ENCODE measurements at regions of chr1 and their contacts with region 1.

Region 1: GRCh38 chr1:6393400-6394187 is at the start of gene ACOT7:
- DNase-seq: peak; percentile 84 to 93 (median 89)
- ATAC-seq: peak; percentile 96
- H3K4me3 ChIP-seq: peak within 1 kb of the TSS; percentile 75
- H3K4me3 Mint-ChIP-seq: peak within 1 kb of the TSS; percentile 87 to 97 (median 90)
- H3K27ac ChIP-seq: peak within 1 kb of the TSS; percentile 88
- H3K27ac Mint-ChIP-seq: peak within 1 kb of the TSS; percentile 85 to 98 (median 95)
- H3K4me1 ChIP-seq: peaks cover 13 to 22% of the 10 kb centered on the region in 2 donors
- H3K4me1 Mint-ChIP-seq: peaks cover 16 to 47% (median 32%) of the 10 kb centered on the region in 7 donors
- H3K27me3 ChIP-seq: no peaks in the 10 kb centered on the region
- H3K27me3 Mint-ChIP-seq: peaks cover 0 to 5% (median 0%) of the 10 kb centered on the region in 5 donors
- total RNA-seq, gene ACOT7: 2.5 to 75.6 (median 3.4) TPM

Region 2: GRCh38 chr1:6026095-6026809 is 367.3 kb before region 1 on chr1:
- CTCF ChIA-PET with region 1: no interaction called
- POLR2A ChIA-PET with region 1: no interaction called
- intact Hi-C with region 1: loop called in 1 of 2 experiments (anchors 1 kb)
- DNase-seq: peak; percentile 82 to 92 (median 89)
- ATAC-seq: peak; percentile 92
- H3K4me3 ChIP-seq: peak overlapping the region; percentile 89
- H3K4me3 Mint-ChIP-seq: peak overlapping the region; percentile 88 to 99 (median 95)
- H3K27ac ChIP-seq: peak overlapping the region; percentile 84
- H3K27ac Mint-ChIP-seq: peak overlapping the region; percentile 87 to 98 (median 96)
- H3K4me1 ChIP-seq: peaks cover 42 to 49% of the 10 kb centered on the region in 2 donors
- H3K4me1 Mint-ChIP-seq: peaks cover 45 to 56% (median 51%) of the 10 kb centered on the region in 7 donors
- H3K27me3 ChIP-seq: no peaks in the 10 kb centered on the region
- H3K27me3 Mint-ChIP-seq: no peaks in the 10 kb centered on the region

Region 3: DNA sequence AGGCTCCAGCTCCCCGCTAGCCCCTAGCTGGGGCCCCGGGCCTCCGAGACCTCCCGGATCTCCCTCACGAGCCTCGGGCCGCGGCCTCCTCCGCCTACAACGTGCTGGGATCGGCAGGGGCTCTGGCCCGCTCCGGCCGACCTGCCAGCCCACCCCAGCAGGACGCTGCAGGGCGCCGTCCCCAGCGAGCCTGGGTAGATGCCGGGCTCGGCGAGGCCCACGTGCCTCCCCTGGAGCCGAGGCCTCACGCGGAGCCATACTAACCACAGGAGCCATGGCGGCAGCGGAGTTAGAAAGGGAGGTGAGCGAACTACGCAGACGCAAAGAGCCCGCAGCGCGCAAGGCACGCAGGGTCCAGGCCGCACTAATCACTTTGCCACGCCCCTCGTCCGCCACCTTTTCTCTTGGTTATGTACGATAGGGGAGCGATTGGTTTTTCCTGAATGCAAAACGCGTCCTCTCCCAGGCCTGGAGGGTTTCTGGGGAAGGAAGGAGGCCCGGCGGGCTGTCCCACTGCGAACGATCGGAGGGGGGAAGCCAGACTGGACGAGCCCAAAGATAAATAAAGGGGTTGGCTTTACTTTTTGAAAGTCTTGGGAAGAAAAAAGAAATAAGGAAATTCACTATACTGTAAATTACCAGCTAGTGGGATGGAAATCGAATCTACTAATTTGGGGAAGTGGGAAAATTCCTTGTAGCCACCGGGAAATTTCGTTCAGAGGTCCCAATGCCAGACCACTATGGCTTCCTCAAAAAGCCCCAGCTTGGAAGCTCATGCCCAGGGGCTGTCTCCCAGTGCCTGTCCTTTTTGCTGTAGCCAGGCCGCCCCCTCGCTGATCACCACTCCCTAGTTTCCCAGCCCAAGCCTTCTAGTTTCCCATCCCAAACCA is 194.1 kb before region 1 on chr1 and contains the start of gene RPL22:
- CTCF ChIA-PET with region 1: no interaction called
- POLR2A ChIA-PET with region 1: no interaction called
- intact Hi-C with region 1: loop called in 1 of 2 experiments (anchors 1 kb)
- DNase-seq: peak; percentile 79 to 98 (median 96)
- ATAC-seq: peak; percentile 99
- H3K4me3 ChIP-seq: peak within 1 kb of the TSS; percentile 79
- H3K4me3 Mint-ChIP-seq: peak within 1 kb of the TSS; percentile 85 to 98 (median 94)
- H3K27ac ChIP-seq: peak within 1 kb of the TSS; percentile 85
- H3K27ac Mint-ChIP-seq: peak within 1 kb of the TSS; percentile 82 to 96 (median 93)
- H3K4me1 ChIP-seq: peaks cover 24 to 25% of the 10 kb centered on the region in 2 donors
- H3K4me1 Mint-ChIP-seq: peaks cover 40 to 56% (median 47%) of the 10 kb centered on the region in 7 donors
- H3K27me3 ChIP-seq: no peaks in the 10 kb centered on the region
- H3K27me3 Mint-ChIP-seq: peaks cover 0 to under 1% (median 0%) of the 10 kb centered on the region in 5 donors
- total RNA-seq, gene RPL22: 431 to 720 (median 579) TPM

Region 4: DNA sequence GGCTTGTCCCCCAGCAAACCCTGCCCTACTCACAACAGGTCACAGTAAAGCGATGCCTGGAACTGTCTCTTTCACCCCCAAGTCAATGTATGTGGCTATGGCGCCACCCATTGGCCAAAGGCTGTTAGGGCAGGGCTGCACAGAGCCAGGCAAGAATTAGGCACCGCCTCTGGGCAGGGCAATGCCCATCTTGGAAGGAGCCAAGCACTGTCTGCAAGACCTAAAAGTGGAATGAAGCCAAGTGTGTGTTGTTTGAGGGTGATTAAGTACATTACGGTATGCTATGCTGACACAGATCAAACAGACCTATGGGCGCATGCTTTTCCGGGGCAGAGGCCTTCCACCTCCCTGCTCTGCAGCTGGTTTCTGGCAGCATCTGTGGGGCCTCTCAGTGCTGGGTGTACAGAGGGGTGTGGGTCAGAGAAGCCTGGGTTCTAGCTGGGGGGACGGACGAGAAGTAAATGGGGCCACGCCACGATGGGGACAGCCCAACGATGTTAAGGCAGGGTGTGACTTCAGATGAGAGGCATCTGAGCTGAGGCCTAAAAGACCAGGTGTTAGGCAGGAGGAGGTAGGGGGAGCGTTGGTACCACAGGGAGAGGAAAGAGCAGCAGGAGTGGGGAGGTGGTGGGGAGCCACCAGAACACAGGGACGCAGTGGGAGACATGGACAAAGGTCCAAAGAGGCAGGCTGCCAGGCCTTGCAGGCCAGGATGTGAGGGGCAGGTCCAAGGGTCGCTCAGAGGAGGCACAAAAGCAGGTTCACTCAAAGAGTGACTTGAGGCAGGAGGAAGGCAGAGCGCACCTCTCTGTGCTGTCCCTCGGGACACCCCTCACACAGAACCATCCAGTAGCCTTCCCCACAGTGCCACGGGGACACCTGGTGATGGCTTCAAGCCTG is 49.8 kb before region 1 on chr1:
- CTCF ChIA-PET with region 1: interaction called, 6 read pairs
- POLR2A ChIA-PET with region 1: interaction called, 7 read pairs
- intact Hi-C with region 1: loop called (anchors 1 kb)
- DNase-seq: peak; percentile 19 to 67 (median 49)
- ATAC-seq: peak; percentile 73
- H3K4me3 ChIP-seq: no peak overlapping the region
- H3K4me3 Mint-ChIP-seq: no peak overlapping the region
- H3K27ac ChIP-seq: no peak overlapping the region
- H3K27ac Mint-ChIP-seq: peak overlapping the region in 1 of 9 donors; percentile 25
- H3K4me1 ChIP-seq: peaks cover 12 to 13% of the 10 kb centered on the region in 2 donors
- H3K4me1 Mint-ChIP-seq: peaks cover 9 to 24% (median 11%) of the 10 kb centered on the region in 7 donors
- H3K27me3 ChIP-seq: no peaks in the 10 kb centered on the region
- H3K27me3 Mint-ChIP-seq: no peaks in the 10 kb centered on the region

Region 5: DNA sequence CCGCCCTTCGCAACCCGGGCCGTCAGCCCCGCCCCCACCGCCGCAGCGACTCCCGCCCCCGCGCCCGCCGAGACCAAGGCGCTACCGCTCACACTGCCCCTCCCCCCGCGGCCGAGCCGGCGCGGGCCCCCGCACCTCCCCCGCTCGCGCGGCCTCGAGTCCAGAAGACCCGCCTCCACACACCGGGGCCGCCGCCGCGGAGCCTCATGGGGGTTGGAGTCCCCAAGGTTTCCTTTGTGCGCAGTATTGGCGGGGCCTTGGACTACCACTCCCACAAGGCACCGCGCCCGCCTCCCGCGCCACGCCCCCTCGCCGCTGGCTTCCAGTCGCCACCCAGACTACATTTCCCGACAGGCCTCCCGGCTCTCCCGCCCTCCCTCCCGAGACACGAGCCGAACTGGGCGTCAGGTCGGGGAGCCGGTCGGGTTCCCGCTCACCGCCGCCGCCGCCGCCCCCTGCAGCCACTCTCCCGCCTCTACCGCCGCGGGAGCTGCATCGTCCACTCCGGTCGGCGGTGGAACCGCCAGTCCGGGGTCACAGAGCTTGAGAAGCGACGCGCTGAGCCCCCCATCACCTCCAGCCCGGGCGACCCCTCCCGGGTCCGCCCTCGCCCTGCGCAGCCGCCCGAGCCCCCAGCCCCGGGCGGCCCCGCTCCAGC is 219.9 kb after region 1 on chr1 and contains the start of gene PHF13:
- CTCF ChIA-PET with region 1: no interaction called
- POLR2A ChIA-PET with region 1: no interaction called
- intact Hi-C with region 1: loop called in 1 of 2 experiments (anchors 1 kb)
- DNase-seq: peak; percentile 97 to 99 (median 98)
- ATAC-seq: peak; percentile 98
- H3K4me3 ChIP-seq: peak within 1 kb of the TSS; percentile 53
- H3K4me3 Mint-ChIP-seq: peak within 1 kb of the TSS; percentile 88 to 97 (median 93)
- H3K27ac ChIP-seq: peak within 1 kb of the TSS; percentile 82
- H3K27ac Mint-ChIP-seq: peak within 1 kb of the TSS; percentile 69 to 95 (median 88)
- H3K4me1 ChIP-seq: peaks cover 0 to 14% of the 10 kb centered on the region in 2 donors
- H3K4me1 Mint-ChIP-seq: peaks cover 16 to 37% (median 25%) of the 10 kb centered on the region in 7 donors
- H3K27me3 ChIP-seq: no peaks in the 10 kb centered on the region
- H3K27me3 Mint-ChIP-seq: peaks cover 0 to 2% (median 0%) of the 10 kb centered on the region in 5 donors
- total RNA-seq, gene PHF13: 7.7 to 14.3 (median 12.2) TPM